ENCODE measurements at regions of chr5 and their contacts with region 1.

Region 1: GRCh38 chr5:159209438-159210305 is at the start of gene RNF145:
- DNase-seq: peak; percentile 94
- H3K4me3 Mint-ChIP-seq: peak within 1 kb of the TSS; percentile 99
- H3K27ac Mint-ChIP-seq: peak within 1 kb of the TSS; percentile 100
- H3K4me1 Mint-ChIP-seq: peaks cover 25% of the 10 kb centered on the region
- H3K27me3 Mint-ChIP-seq: no peaks in the 10 kb centered on the region
- total RNA-seq, gene RNF145: 91.4 to 92.6 TPM

Region 2: DNA sequence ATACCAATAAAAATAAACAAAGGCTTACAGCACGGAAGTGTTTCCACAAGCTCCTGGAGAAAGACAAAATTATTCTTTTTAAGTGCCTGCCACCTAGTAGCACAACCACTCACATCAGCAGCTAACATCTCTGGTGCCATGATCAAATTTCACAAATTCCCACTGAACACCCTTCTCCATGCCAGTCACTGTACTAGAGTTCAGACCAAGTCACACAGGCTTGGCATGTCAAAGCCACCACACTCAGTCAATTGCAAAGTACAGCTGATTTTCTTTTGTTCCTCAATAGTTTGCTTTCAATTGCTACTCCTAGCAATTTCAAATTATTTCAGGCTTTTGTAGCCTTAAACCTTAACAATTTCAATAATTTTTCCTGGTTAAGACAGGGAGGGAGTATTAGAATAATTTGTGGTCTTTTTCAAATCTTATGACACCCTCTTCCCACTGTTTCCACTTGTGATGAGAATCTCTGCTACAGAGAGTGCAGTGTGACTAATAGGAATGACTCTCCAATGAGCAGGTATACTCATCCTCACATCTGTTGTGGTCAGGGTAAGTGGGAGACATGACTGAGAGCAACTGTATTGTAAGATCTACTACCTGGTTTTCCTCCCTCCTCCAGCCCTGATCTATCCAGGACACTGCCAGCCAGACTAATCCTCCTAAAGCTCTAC is 46.5 kb before region 1 on chr5:
- CTCF ChIA-PET with region 1: interaction called, 34 read pairs
- POLR2A ChIA-PET with region 1: interaction called, 28 read pairs
- intact Hi-C with region 1: loop called (anchors 1 kb)
- DNase-seq: peak; percentile 24
- H3K4me3 Mint-ChIP-seq: no peak overlapping the region
- H3K27ac Mint-ChIP-seq: peak overlapping the region; percentile 66
- H3K4me1 Mint-ChIP-seq: peaks cover 41% of the 10 kb centered on the region
- H3K27me3 Mint-ChIP-seq: no peaks in the 10 kb centered on the region

Region 3: DNA sequence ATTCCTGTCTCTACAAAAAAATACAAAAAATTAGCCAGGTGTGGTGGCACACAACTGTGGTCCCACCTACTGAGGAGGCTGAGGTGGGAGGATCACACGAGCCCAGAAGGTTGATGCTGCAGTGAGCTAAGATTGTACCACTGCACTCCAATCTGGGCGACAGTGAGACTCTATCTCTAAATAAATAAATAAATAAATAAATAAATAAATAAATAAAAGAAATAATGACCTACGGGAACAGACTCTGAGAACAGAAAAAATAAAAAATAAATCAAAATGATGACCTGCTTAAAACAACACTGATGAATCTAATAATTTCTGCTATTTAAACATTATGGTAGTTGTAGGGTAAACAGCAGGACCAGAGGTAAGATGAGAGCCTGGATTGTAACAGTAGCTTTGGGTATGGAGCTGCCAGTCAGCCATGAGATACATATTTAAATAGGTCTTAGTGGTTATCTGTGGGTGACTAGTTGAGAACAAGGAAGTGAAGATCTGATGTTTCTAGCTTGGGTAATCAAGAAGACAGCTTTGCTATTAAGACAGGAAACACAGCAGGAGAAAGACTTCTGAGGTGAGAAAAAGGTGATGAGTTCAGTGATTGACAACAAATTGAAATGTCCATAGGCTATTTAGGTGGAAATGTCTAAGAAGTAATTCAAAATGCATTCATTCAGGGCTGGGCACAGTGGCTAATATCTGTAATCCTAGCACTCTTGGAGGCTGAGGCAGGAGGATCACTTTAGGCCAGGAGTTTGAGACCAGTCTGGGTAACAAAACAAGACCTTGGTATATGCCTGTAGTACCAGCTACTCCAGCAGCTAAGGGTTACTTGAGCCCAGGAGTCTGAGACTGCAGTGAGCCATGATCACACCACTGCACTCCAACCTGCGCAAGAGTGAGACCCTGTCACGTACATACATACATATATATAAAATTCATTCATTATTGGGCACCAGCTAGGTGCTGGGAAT is 11.3 kb before region 1 on chr5:
- CTCF ChIA-PET with region 1: interaction called, 4 read pairs
- POLR2A ChIA-PET with region 1: interaction called, 15 read pairs
- intact Hi-C with region 1: no loop called
- DNase-seq: no peak
- H3K4me3 Mint-ChIP-seq: no peak overlapping the region
- H3K27ac Mint-ChIP-seq: peak overlapping the region; percentile 80
- H3K4me1 Mint-ChIP-seq: peaks cover 63% of the 10 kb centered on the region
- H3K27me3 Mint-ChIP-seq: no peaks in the 10 kb centered on the region

Region 4: DNA sequence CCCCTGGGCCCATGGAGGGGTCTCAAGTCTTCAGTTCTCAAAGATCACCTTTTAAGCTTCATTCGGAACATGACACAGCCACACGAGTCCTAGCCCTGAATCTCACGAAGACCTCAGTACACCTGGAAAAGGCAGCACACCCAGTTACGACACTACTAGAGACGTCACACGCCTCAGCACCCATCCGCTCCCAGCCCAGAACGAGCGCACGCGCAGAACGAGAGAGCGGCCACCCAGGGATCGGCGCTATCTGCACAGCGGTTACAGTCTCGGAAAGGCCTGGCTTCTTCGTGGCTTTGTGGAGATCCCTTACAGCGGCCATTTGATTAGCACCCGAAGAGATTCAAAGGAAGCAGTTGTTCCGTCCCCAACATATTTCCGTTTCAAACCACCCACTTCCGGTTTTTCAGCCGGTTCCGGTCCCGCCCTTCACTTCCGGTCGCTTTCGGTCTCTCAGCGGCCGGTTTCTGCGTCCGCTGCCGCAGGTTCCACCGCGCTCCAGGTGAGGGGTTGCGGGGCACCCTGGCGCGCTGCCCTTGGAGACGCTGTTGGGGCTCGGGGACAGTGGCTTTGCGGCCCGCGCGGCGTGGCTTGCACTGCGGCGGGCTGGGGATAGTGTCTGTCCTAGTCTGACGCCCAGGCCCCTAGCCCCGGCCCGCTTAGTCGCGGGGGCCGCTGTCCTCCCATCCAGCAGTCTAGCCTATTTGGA is 53.3 kb after region 1 on chr5 and contains the start of gene UBLCP1:
- CTCF ChIA-PET with region 1: interaction called, 5 read pairs
- POLR2A ChIA-PET with region 1: interaction called, 16 read pairs
- intact Hi-C with region 1: loop called (anchors 1 kb)
- DNase-seq: peak; percentile 88
- H3K4me3 Mint-ChIP-seq: peak within 1 kb of the TSS; percentile 97
- H3K27ac Mint-ChIP-seq: peak within 1 kb of the TSS; percentile 94
- H3K4me1 Mint-ChIP-seq: peaks cover 35% of the 10 kb centered on the region
- H3K27me3 Mint-ChIP-seq: no peaks in the 10 kb centered on the region
- total RNA-seq, gene UBLCP1: 32.9 to 34.4 TPM

Region 5: DNA sequence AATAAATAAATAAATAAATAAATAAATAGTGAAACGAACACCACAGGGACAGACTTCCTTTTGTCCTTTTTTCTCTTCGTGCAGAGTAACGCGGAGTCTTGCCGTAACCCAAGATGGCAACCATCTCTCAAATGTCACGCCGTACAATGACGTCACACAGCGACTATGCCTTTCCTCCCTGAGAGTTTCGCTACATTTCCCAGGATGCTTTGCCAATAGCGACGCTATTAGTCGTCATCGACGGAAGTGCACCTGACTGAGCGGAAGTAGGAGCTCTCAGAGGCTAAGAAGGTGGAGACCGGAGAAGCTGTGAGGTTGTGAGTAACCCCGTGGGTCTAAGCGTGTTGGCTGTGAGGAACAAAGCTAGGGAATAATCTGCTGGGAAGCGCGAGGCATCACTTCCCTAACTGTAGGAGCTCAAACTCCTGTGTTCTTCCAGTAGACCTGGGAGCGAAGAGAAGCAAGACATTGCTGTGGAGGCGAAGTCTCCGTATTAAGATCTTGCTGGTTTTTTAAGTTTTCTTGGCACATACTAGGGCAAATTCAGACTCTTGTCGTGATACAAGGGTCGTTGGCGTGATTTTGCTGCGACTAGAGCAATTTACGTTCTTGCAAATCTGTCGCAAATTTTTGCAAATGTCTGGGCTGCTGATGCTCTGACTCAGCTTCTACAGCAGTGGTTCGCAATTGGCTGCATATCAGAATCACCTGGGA is 799.4 kb after region 1 on chr5 and contains the start of gene TTC1:
- CTCF ChIA-PET with region 1: no interaction called
- POLR2A ChIA-PET with region 1: no interaction called
- intact Hi-C with region 1: loop called (anchors 2 kb)
- DNase-seq: peak; percentile 94
- H3K4me3 Mint-ChIP-seq: peak within 1 kb of the TSS; percentile 99
- H3K27ac Mint-ChIP-seq: peak within 1 kb of the TSS; percentile 95
- H3K4me1 Mint-ChIP-seq: peaks cover 22% of the 10 kb centered on the region
- H3K27me3 Mint-ChIP-seq: no peaks in the 10 kb centered on the region
- total RNA-seq, gene TTC1: 53.6 to 54.3 TPM

Region 6: GRCh38 chr5:160467555-160468362 is 1258.1 kb after region 1 on chr5:
- CTCF ChIA-PET with region 1: no interaction called
- POLR2A ChIA-PET with region 1: no interaction called
- intact Hi-C with region 1: loop called (anchors 2 kb)
- DNase-seq: peak; percentile 91
- H3K4me3 Mint-ChIP-seq: peak overlapping the region; percentile 98
- H3K27ac Mint-ChIP-seq: peak overlapping the region; percentile 98
- H3K4me1 Mint-ChIP-seq: peaks cover 65% of the 10 kb centered on the region
- H3K27me3 Mint-ChIP-seq: no peaks in the 10 kb centered on the region